CD8-positive, alpha-beta T cell (primary cell): ENCODE measurements at regions of chr2 and their contacts with region 1.

Region 1: GRCh38 chr2:167640096-167640495 is 607.3 kb downstream of the STK39 start:
- DNase-seq: no peak
- ATAC-seq: no peak
- H3K4me3 ChIP-seq: no peak overlapping the region
- H3K4me3 Mint-ChIP-seq: no peak overlapping the region
- H3K27ac ChIP-seq: no peak overlapping the region
- H3K27ac Mint-ChIP-seq: no peak overlapping the region
- H3K4me1 ChIP-seq: no peaks in the 10 kb centered on the region
- H3K4me1 Mint-ChIP-seq: no peaks in the 10 kb centered on the region
- H3K27me3 ChIP-seq: no peaks in the 10 kb centered on the region
- H3K27me3 Mint-ChIP-seq: no peaks in the 10 kb centered on the region
- CTCF ChIP-seq: no peak

Region 2: DNA sequence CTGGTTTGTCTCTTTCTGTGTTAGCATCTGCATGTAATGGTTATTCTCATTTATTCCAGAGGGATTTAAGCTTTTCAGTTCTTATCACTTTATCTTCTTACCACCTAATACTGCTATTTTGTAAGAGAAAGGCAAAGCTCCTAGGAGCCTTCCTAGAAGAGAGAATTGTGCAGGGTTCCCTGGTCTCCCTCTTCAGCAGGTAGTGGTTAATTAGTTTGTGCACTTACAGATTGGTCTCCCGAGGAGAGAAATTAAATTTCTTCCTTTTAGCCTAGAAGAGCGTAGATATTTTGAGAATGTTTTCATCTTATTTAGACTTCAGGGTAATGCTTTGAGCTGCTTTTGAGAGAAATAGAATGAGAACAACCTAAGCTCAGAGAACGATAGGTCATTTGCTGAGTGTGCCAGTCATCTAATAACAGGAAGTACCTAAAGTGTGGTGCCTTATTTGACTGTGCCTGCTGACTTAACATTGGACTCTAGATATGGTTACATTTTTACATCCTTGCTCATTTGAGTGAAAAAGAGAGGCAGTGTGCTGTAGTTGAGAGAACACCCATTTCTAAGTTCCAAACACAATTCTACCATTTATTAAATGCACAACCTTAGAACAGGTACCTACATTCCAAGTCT is 44.1 kb before region 1 on chr2:
- CTCF ChIA-PET with region 1: no interaction called
- POLR2A ChIA-PET with region 1: no interaction called
- intact Hi-C with region 1: loop called in 1 of 2 experiments (anchors 2 kb)
- DNase-seq: no peak
- ATAC-seq: no peak
- H3K4me3 ChIP-seq: no peak overlapping the region
- H3K4me3 Mint-ChIP-seq: peak overlapping the region; percentile 9
- H3K27ac ChIP-seq: no peak overlapping the region
- H3K27ac Mint-ChIP-seq: no peak overlapping the region
- H3K4me1 ChIP-seq: no peaks in the 10 kb centered on the region
- H3K4me1 Mint-ChIP-seq: peaks cover 5% of the 10 kb centered on the region
- H3K27me3 ChIP-seq: no peaks in the 10 kb centered on the region
- H3K27me3 Mint-ChIP-seq: no peaks in the 10 kb centered on the region
- CTCF ChIP-seq: no peak

Region 3: DNA sequence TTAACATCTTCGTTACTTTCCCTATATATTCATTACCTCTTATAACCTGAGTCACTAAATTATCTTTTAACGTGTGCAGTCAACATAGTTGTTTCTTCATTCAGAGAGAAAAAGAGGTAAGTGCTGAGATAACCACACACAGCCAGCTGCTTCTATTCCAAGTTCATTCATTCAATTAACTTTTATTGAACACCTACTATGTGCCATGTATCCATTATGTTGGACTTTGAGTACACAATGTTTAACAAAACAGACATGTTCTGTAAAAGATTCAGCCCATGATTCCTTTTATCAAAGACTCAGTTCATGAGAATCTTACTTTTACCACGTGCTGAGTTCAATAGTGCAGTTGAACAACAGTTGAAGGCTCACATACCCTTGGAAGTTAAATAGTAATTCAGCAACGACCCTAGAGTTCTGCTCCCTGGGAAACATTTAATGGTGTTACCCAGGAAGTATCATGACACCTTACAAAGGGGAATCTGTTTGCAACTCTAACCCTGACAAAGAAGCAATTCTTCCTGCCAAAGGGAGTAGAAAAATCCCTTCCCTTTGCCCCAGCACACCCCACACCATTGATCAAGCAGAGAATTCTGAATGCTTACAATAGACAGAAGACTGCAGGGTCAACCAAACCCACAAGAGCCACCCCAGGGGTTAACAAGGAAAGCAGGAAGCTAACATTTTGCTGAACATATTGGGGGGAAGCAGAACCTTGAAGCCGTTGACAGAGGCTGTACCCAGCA is 11.5 kb after region 1 on chr2:
- CTCF ChIA-PET with region 1: no interaction called
- POLR2A ChIA-PET with region 1: no interaction called
- intact Hi-C with region 1: no loop called
- DNase-seq: no peak
- ATAC-seq: no peak
- H3K4me3 ChIP-seq: no peak overlapping the region
- H3K4me3 Mint-ChIP-seq: no peak overlapping the region
- H3K27ac ChIP-seq: no peak overlapping the region
- H3K27ac Mint-ChIP-seq: no peak overlapping the region
- H3K4me1 ChIP-seq: no peaks in the 10 kb centered on the region
- H3K4me1 Mint-ChIP-seq: no peaks in the 10 kb centered on the region
- H3K27me3 ChIP-seq: no peaks in the 10 kb centered on the region
- H3K27me3 Mint-ChIP-seq: no peaks in the 10 kb centered on the region
- CTCF ChIP-seq: no peak